BJ (cell line): ENCODE measurements at regions of chr14 and their contacts with region 1.

Region 1: GRCh38 chr14:50773632-50774541 is 57.1 kb downstream of the NIN start:
- DNase-seq: no peak
- H3K4me3 ChIP-seq: no peak overlapping the region
- H3K27me3 ChIP-seq: no peaks in the 10 kb centered on the region
- CTCF ChIP-seq: peak; percentile 94

Region 2: DNA sequence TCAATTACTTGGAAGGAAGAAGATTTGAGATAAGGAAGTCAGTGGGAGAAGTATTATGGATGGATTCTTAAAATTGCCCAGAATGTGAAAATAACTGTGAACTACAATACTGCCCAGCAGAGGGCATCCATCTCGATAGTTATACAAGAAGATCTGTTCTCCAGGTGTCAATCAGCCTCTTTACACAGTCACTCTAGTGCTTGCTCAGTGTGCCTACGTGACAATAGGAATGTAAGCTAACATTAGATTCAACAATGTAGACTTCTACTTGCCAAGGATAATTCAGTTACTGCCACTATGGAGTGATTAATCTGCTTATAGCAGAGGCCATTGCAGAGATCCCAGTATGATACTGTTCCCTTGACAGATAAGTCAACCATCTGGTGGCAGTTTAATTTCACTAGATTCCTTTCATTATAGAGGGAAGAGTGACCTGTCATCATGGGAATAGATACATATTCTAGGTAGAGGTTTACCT is 230.9 kb before region 1 on chr14:
- CTCF ChIA-PET with region 1: interaction called, 117 read pairs
- POLR2A ChIA-PET with region 1: no interaction called
- DNase-seq: no peak
- H3K4me3 ChIP-seq: no peak overlapping the region
- H3K27me3 ChIP-seq: peaks cover 2% of the 10 kb centered on the region
- CTCF ChIP-seq: peak; percentile 54

Region 3: GRCh38 chr14:50599700-50600444 is 174.0 kb before region 1 on chr14:
- CTCF ChIA-PET with region 1: interaction called, 78 read pairs
- POLR2A ChIA-PET with region 1: interaction called, 18 read pairs
- DNase-seq: no peak
- H3K4me3 ChIP-seq: no peak overlapping the region
- H3K27me3 ChIP-seq: no peaks in the 10 kb centered on the region
- CTCF ChIP-seq: peak; percentile 63

Region 4: DNA sequence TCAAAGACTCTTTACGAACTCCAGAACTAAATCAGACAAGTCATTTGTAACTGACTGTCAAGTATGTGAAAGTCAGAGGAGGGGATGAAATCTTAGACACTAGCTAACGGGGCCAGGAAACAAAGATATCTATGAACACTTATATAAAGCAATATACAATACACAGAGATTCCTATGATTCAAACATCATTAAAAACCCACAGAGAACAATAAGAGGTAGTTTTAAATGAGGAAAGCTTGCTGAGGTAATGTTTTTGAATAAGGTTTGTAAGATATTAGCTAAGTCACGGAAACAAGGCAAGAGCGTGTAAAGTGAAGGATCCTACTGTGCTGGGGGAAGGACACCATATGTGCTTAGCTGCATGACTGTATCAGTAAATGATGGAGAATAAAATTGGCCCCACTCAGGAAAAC is 142.5 kb before region 1 on chr14:
- CTCF ChIA-PET with region 1: interaction called, 13 read pairs
- POLR2A ChIA-PET with region 1: no interaction called
- DNase-seq: no peak
- H3K4me3 ChIP-seq: no peak overlapping the region
- H3K27me3 ChIP-seq: no peaks in the 10 kb centered on the region
- CTCF ChIP-seq: no peak

Region 5: DNA sequence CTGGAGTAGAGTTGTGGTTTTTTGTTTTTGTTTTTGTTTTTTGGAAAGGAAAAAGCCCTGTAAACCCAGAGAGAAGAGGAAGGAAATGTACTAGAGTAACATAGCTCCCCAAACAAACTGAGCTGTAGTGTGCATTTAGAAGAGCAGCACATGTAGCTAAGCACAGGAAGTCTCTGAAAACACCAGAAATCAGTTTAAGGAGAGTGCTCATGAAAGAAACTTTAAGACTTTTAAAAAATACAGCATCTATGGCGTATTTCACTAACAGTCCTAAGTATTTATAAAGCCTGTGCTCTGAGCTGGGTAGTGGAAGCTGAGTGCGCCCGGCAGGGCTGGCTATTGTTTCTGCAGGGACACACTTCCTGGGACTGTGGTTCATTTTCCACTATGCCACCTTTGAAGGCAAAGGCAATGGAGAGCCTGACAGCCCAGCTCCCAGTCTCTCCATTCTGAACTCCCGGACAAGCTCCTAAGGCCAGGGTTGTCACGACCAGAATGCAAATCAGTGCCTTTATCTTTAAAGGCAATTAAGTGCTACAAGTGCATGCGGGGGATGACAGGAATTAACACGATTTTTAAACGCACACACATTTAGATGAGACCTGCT is 11.7 kb after region 1 on chr14:
- CTCF ChIA-PET with region 1: interaction called, 44 read pairs
- POLR2A ChIA-PET with region 1: no interaction called
- DNase-seq: no peak
- H3K4me3 ChIP-seq: no peak overlapping the region
- H3K27me3 ChIP-seq: no peaks in the 10 kb centered on the region
- CTCF ChIP-seq: no peak